ENCODE measurements at regions of chrX and their contacts with region 1.

Region 1: GRCh38 chrX:11334165-11334564 is 41.0 kb downstream of the AMELX start:
- DNase-seq: no peak
- H3K4me3 ChIP-seq: no peak overlapping the region
- H3K27ac ChIP-seq: no peak overlapping the region
- H3K4me1 ChIP-seq: no peaks in the 10 kb centered on the region
- H3K27me3 ChIP-seq: peaks cover 0 to 13% of the 10 kb centered on the region in 2 donors
- CTCF ChIP-seq: no peak
- POLR2A ChIP-seq: no peak

Region 2: GRCh38 chrX:11269996-11270395 is 64.2 kb before region 1 on chrX:
- intact Hi-C with region 1: loop called (anchors 2 kb)
- DNase-seq: no peak
- H3K4me3 ChIP-seq: no peak overlapping the region
- H3K27ac ChIP-seq: no peak overlapping the region
- H3K4me1 ChIP-seq: no peaks in the 10 kb centered on the region
- H3K27me3 ChIP-seq: peaks cover 0 to 17% of the 10 kb centered on the region in 2 donors
- CTCF ChIP-seq: no peak
- POLR2A ChIP-seq: no peak

Region 3: DNA sequence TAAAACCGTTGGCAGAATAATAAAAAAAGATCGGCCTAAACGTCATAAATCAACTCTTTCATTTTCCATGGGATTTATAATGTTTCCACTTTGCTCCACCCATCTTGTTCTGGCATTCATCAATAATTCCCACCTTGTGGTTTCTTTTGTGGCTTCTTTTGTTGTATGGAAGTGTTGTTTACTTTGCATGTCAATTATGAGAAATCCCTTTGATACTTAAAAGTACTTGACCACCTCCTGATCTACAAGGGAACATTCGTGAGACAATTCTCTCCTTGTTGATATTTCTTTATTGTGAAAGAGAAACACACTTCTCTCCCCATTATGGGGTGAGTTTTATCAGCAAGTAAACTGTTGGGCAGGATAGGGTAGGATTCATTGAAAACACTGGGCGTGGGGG is 38.1 kb before region 1 on chrX:
- intact Hi-C with region 1: no loop called
- DNase-seq: no peak
- H3K4me3 ChIP-seq: no peak overlapping the region
- H3K27ac ChIP-seq: no peak overlapping the region
- H3K4me1 ChIP-seq: no peaks in the 10 kb centered on the region
- H3K27me3 ChIP-seq: peaks cover 0 to 30% of the 10 kb centered on the region in 2 donors
- CTCF ChIP-seq: no peak
- POLR2A ChIP-seq: no peak

Region 4: GRCh38 chrX:11351375-11352295 is 17.5 kb after region 1 on chrX:
- intact Hi-C with region 1: no loop called
- DNase-seq: no peak
- H3K4me3 ChIP-seq: peak overlapping the region in 1 of 3 donors; percentile 17
- H3K27ac ChIP-seq: peak overlapping the region; percentile 11 to 67
- H3K4me1 ChIP-seq: no peaks in the 10 kb centered on the region
- H3K27me3 ChIP-seq: peaks cover 0 to 9% of the 10 kb centered on the region in 2 donors
- CTCF ChIP-seq: no peak
- POLR2A ChIP-seq: no peak

Region 5: DNA sequence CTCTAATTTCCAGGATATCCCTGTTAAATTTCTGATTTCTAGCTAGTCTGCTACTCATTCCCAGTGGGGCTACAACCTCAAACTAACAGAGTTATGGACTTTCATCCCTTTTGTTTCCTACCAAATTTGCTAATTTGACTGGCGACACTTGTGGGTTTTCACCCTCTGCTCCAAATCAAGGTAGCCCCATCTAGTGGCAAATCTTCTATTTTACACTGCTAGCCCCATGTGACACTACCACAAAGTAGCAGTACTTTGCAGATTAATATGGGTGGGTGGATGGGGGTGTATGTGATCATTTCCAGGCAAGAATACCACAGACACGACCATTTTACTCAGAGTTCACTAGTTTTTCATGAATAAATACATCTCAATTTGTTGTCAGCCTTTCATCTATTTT is 574.2 kb after region 1 on chrX:
- intact Hi-C with region 1: loop called (anchors 5 kb)
- DNase-seq: no peak
- H3K4me3 ChIP-seq: no peak overlapping the region
- H3K27ac ChIP-seq: no peak overlapping the region
- H3K4me1 ChIP-seq: no peaks in the 10 kb centered on the region
- H3K27me3 ChIP-seq: peaks cover 0 to 4% of the 10 kb centered on the region in 2 donors
- CTCF ChIP-seq: no peak
- POLR2A ChIP-seq: no peak